Sigmoid colon (tissue), 7 donors: ENCODE measurements at regions of chr19 and their contacts with region 1.

Region 1: GRCh38 chr19:46704379-46705076 is 12.4 kb downstream of the PRKD2 start:
- DNase-seq: peak; percentile 85
- H3K4me3 ChIP-seq: no peak overlapping the region
- H3K27ac ChIP-seq: no peak overlapping the region
- H3K4me1 ChIP-seq: no peaks in the 10 kb centered on the region
- H3K27me3 ChIP-seq: no peaks in the 10 kb centered on the region
- CTCF ChIP-seq: peak; percentile 82 to 97 (median 90)
- EP300 ChIP-seq: no peak
- POLR2A ChIP-seq: no peak

Region 2: DNA sequence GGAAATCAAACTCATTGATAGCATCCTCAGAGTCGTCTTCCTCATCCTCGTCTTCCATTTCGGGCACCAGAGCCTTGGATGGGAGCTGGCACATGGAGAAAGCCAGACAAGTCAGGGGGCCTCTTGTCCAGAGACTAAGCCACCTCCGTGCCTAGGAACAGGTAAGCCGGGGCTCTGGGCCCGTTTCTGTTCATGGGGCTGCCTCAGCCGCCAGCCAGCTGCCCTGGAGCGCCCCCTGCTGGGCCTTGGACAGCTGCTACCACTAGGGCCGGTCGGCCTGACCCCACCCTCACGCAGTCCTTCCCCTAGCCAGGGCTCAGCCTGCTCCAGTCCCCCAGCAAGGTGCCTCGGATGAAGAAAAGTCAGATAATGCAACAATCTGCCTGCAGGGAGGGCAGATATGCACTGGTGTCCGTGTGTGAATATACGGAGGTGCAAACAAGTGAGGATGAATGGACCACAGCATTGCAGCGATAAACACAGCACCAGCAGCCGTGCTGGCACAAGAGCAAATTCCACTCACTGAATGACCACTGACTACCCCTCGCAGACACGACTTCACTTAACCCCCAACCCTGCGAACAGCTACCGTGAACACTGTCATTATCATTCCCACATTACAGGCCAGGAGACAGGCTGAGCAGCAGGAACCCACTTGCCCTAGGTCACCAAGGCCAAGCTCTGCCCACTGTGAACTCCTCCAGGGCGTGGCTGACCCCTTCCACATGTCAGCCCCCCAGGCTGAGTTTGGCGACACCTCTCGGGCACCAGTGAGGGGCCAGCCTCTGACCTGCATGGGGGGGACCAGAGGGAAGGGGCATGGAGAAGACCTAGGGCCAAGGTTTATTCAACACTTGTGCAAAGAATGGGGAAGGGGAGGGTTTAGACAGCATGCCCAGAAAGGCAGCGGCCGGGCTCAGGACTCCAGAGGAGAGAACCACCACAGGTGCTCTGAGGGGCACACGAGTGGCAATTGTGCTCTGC is 24.5 kb after region 1 on chr19:
- intact Hi-C with region 1: loop called (anchors 1 kb)
- DNase-seq: peak; percentile 87
- H3K4me3 ChIP-seq: no peak overlapping the region
- H3K27ac ChIP-seq: peak overlapping the region; percentile 27 to 51 (median 40)
- H3K4me1 ChIP-seq: peaks cover 0 to 19% (median 13%) of the 10 kb centered on the region in 4 donors
- H3K27me3 ChIP-seq: no peaks in the 10 kb centered on the region
- CTCF ChIP-seq: peak; percentile 73 to 90 (median 88)
- EP300 ChIP-seq: no peak
- POLR2A ChIP-seq: no peak

Region 3: DNA sequence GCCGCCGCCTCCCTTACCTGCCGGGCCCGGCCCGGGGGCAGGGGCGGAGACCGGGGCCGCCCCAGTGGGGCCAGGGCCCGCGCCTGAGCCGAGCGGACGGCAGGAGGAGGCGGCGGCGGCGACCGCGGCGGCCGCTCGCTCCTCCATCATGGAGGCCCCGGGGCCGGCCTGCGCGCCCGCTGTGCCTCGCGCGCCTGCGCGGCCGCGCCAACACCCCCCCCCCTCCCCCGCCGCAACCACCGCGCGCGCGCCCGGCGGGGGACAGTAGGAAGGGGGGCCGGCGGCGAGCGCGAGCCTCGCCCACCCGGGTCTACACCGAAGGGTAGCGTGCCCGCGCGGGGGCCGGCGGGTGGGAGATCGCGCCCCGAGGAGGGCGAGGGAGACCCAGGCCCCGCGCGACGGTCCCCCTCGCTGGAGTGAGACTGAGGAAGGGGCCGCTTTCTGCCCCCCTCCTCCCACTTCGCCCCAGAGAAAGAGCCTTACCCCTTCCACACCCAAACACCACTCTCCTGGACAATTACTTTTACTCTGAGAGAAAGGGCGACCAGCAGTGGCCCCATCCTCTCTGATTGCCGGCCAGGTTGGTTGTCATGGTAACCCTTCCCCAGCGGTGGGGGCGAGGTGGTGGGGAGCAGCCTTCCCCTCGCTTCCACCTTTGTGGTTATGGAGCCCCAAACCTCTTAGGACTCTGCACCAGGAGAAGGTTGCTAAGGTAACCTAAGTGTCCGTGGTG is 41.9 kb after region 1 on chr19 and contains the start of gene STRN4:
- intact Hi-C with region 1: loop called (anchors 5 kb)
- DNase-seq: no peak
- H3K4me3 ChIP-seq: peak within 1 kb of the TSS; percentile 73 to 100 (median 96)
- H3K27ac ChIP-seq: peak within 1 kb of the TSS; percentile 86 to 97 (median 92)
- H3K4me1 ChIP-seq: peaks cover 0 to 49% (median 45%) of the 10 kb centered on the region in 4 donors
- H3K27me3 ChIP-seq: no peaks in the 10 kb centered on the region
- CTCF ChIP-seq: no peak
- EP300 ChIP-seq: no peak
- POLR2A ChIP-seq: no peak
- total RNA-seq, gene STRN4: 42.5 to 62.6 (median 49.7) TPM

Region 4: DNA sequence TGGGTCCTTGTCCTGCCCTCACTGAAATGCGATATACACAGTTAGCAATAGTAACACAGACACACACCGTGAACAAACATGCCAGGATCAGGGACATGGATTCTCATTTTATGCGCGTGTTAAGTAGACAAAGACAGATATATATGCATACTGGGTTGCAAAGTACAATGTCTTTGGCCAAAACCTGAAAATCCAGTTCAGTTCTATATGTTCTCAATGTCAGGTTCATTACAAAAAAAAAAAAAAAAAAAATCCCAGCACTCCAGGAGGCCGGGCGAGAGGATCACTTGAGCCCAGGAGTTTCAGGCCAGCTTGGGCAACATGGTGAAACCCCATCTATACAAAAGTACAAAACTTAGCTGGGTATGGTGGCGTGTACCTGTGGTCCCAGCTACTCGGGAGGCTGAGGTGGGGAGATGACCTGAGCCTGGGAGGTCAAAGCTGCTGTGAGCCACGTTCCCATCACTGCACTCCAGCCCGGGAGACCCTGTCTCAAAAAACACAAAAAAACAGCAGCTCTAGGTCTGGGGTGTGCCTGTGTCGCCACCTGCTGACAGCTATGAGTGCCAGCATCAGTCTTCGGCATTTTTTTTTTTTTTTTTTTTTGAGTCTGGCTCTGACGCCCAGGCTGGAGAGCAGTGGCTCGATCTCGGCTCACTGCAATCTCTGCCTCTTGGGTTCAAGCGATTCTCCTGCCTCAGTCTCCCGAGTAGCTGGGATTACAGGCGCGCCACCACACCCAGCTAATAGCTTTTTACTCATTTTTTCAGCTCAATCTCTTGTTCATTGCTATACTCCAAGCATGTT is 135.8 kb after region 1 on chr19:
- intact Hi-C with region 1: loop called (anchors 2 kb)
- DNase-seq: peak; percentile 77
- H3K4me3 ChIP-seq: no peak overlapping the region
- H3K27ac ChIP-seq: peak overlapping the region; percentile 60 to 79 (median 69)
- H3K4me1 ChIP-seq: peaks cover 0 to 34% (median 29%) of the 10 kb centered on the region in 4 donors
- H3K27me3 ChIP-seq: no peaks in the 10 kb centered on the region
- CTCF ChIP-seq: peak; percentile 72 to 86 (median 78)
- EP300 ChIP-seq: no peak
- POLR2A ChIP-seq: no peak